Activated naive CD4-positive, alpha-beta T cell treated with anti-CD3 and anti-CD28 coated beads for 36 hours (primary cell): ENCODE measurements at regions of chr1 and their contacts with region 1.

Region 1: GRCh38 chr1:207828485-207829158 is 76.8 kb downstream of the CD46 start:
- DNase-seq: peak; percentile 79
- H3K4me3 Mint-ChIP-seq: no peak overlapping the region
- H3K27ac Mint-ChIP-seq: peak overlapping the region; percentile 63
- H3K4me1 Mint-ChIP-seq: peaks cover 98% of the 10 kb centered on the region
- H3K27me3 Mint-ChIP-seq: no peaks in the 10 kb centered on the region

Region 2: DNA sequence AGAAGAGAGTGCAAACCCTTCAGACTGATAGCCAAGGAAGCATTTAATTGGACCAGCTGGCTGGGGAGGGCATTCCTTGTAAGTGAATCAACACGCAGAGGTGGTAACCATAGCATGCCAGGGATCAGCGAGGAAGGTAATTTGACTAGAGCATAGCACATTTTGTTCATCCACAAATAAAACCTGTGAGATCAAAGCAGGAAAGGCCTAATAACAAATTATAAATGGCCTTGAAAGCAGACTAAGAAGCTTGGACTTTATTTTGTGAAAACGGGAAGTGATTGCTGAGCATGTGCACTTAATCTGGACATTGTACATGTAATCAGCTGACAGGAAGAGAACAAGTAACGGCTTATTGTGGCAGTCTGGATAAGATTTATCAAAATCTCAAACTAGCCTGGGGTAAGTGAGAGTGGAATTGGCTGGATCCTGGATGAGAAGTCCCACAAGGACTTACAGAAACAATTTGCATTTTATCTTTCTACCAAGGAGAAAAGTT is 518.8 kb before region 1 on chr1:
- CTCF ChIA-PET with region 1: no interaction called
- intact Hi-C with region 1: no loop called
- DNase-seq: peak; percentile 22
- H3K4me3 Mint-ChIP-seq: peak overlapping the region; percentile 56
- H3K27ac Mint-ChIP-seq: peak overlapping the region; percentile 37
- H3K4me1 Mint-ChIP-seq: peaks cover 19% of the 10 kb centered on the region
- H3K27me3 Mint-ChIP-seq: no peaks in the 10 kb centered on the region

Region 3: DNA sequence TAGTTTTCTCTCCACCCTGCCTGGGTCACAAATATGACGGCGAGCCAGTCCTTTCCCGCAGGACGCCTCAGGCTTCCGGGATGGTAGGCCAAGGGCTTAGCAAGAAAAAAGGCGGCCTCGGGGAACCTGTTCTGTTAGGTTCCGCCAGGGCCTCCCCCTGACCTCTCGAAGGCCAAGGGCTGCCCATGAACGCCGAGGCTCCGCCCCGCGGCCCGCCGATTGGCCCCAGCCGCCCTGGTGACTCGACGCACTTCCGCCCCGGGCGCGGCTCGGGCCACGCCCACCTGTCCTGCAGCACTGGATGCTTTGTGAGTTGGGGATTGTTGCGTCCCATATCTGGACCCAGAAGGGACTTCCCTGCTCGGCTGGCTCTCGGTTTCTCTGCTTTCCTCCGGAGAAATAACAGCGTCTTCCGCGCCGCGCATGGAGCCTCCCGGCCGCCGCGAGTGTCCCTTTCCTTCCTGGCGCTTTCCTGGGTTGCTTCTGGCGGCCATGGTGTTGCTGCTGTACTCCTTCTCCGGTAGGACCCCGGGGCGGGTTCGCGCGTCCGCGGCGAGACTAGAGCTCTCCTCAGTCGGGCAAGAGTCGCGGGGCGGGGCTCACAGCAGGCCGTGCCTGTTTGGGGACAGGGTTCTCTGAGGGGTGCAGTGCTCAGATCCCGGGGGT is 76.7 kb before region 1 on chr1 and contains the start of gene CD46:
- CTCF ChIA-PET with region 1: no interaction called
- intact Hi-C with region 1: loop called (anchors 1 kb)
- DNase-seq: peak; percentile 97
- H3K4me3 Mint-ChIP-seq: peak within 1 kb of the TSS; percentile 92
- H3K27ac Mint-ChIP-seq: peak within 1 kb of the TSS; percentile 98
- H3K4me1 Mint-ChIP-seq: peaks cover 59% of the 10 kb centered on the region
- H3K27me3 Mint-ChIP-seq: no peaks in the 10 kb centered on the region
- total RNA-seq, gene CD46: 91.0 to 93.4 TPM

Region 4: DNA sequence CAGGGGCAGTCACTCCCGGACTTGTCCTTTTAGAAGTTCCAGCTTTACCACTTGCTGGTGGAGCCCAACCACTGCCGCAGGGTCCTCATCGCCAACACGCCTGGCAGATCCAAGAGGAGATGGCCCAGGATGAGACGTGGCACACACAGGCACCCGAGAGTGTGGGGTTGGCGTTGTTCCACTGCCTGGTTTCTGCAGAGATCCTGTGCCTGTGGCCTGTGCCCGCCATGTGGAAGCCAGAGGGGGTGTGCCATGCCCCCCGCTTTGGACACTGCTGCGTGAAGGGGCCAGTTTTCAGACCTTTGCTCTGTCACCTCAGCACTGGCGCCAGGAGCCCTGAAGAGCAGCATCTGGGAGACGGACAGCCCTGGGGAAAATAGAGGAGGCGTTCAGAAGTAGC is 66.0 kb before region 1 on chr1:
- CTCF ChIA-PET with region 1: no interaction called
- intact Hi-C with region 1: no loop called
- DNase-seq: no peak
- H3K4me3 Mint-ChIP-seq: no peak overlapping the region
- H3K27ac Mint-ChIP-seq: no peak overlapping the region
- H3K4me1 Mint-ChIP-seq: peaks cover 9% of the 10 kb centered on the region
- H3K27me3 Mint-ChIP-seq: no peaks in the 10 kb centered on the region

Region 5: GRCh38 chr1:207848234-207848633 is 19.6 kb after region 1 on chr1:
- CTCF ChIA-PET with region 1: interaction called, 7 read pairs
- intact Hi-C with region 1: loop called (anchors 1 kb)
- DNase-seq: peak; percentile 83
- H3K4me3 Mint-ChIP-seq: peak overlapping the region; percentile 22
- H3K27ac Mint-ChIP-seq: peak overlapping the region; percentile 63
- H3K4me1 Mint-ChIP-seq: peaks cover 77% of the 10 kb centered on the region
- H3K27me3 Mint-ChIP-seq: no peaks in the 10 kb centered on the region

Region 6: DNA sequence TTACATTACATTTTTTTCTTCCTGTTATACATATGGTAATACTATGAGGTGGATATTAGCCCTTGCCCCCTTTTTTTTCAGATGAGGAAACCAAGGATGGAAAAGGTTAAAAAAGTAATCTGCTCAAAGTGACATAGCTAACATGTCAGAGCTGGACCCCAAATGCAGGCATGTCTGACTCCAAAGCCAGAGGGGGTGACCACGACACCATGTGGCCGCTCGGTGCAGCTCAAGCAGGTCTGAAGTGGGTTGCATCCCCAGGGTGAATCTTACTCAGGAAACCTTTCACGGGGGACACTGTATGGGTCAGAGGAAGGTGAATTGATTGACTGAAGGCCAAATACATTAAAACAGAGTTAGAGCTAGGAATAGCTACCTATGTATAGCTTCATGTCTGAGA is 47.5 kb after region 1 on chr1:
- CTCF ChIA-PET with region 1: interaction called, 342 read pairs
- intact Hi-C with region 1: no loop called
- DNase-seq: peak; percentile 23
- H3K4me3 Mint-ChIP-seq: no peak overlapping the region
- H3K27ac Mint-ChIP-seq: no peak overlapping the region
- H3K4me1 Mint-ChIP-seq: peaks cover 60% of the 10 kb centered on the region
- H3K27me3 Mint-ChIP-seq: no peaks in the 10 kb centered on the region

Region 7: GRCh38 chr1:208085655-208086515 is 257.3 kb after region 1 on chr1:
- CTCF ChIA-PET with region 1: no interaction called
- intact Hi-C with region 1: loop called (anchors 2 kb)
- DNase-seq: no peak
- H3K4me3 Mint-ChIP-seq: peak overlapping the region; percentile 70
- H3K27ac Mint-ChIP-seq: peak overlapping the region; percentile 77
- H3K4me1 Mint-ChIP-seq: peaks cover 28% of the 10 kb centered on the region
- H3K27me3 Mint-ChIP-seq: no peaks in the 10 kb centered on the region